ENCODE measurements at regions of chr16 and their contacts with region 1.

Region 1: GRCh38 chr16:6643080-6643686 is 689.5 kb upstream of the RBFOX1 start:
- DNase-seq: peak; percentile 31
- ATAC-seq: no peak
- H3K4me3 ChIP-seq: no peak overlapping the region
- H3K27ac ChIP-seq: no peak overlapping the region
- H3K4me1 ChIP-seq: no peaks in the 10 kb centered on the region
- H3K27me3 ChIP-seq: peaks cover 3 to 16% of the 10 kb centered on the region in 2 experiments; a peak in 3 of 5 replicates
- CTCF ChIP-seq: peak; percentile 68
- EP300 ChIP-seq: no peak
- POLR2A ChIP-seq: no peak
- RAD21 ChIP-seq: peak; percentile 41; the same call in 1 of the 2 replicates

Region 2: DNA sequence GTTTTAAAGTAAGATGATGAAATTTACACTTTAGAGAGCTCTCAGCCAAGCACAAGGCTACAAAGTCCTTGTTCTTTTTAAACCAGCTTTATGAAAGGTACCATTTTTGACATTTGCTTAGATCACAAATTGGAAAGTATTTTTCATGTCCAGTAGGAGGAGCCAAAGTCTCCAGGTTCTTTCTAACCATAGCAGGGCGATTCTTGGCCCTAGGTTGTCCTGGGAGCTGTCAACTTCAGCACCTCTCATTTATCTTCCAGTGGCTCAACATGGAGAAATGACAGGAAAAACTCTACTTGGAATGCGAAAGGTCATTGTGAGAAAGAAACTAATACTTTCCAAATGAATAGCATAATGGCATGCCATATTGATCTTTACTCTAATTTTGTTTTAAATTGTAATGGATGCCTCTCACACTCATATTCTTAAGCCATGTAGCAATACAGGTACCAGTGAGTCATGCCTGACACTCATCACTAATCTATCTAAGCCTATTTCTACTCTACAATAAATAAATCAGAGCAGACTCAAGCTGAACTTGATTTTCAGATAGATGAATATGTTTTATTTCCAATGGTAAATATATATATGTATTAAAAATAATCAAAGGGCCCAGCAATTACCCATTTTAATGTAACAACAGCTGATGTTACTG is 626.5 kb before region 1 on chr16:
- CTCF ChIA-PET with region 1: interaction called, 5 read pairs
- POLR2A ChIA-PET with region 1: no interaction called
- in situ Hi-C with region 1: loop called (anchors 5 kb)
- intact Hi-C with region 1: no loop called
- DNase-seq: peak; percentile 29
- ATAC-seq: peak; percentile 67; the same call in 2 of the 3 replicates
- H3K4me3 ChIP-seq: no peak overlapping the region
- H3K27ac ChIP-seq: no peak overlapping the region
- H3K4me1 ChIP-seq: no peaks in the 10 kb centered on the region
- H3K27me3 ChIP-seq: peaks cover 0 to 3% of the 10 kb centered on the region in 2 experiments; a peak in 2 of 5 replicates
- CTCF ChIP-seq: peak; percentile 57
- EP300 ChIP-seq: no peak
- POLR2A ChIP-seq: no peak
- RAD21 ChIP-seq: no peak

Region 3: GRCh38 chr16:6360641-6361040 is 282.5 kb before region 1 on chr16:
- CTCF ChIA-PET with region 1: no interaction called
- POLR2A ChIA-PET with region 1: no interaction called
- in situ Hi-C with region 1: no loop called
- intact Hi-C with region 1: no loop called
- DNase-seq: no peak
- ATAC-seq: no peak
- H3K4me3 ChIP-seq: no peak overlapping the region
- H3K27ac ChIP-seq: no peak overlapping the region
- H3K4me1 ChIP-seq: no peaks in the 10 kb centered on the region
- H3K27me3 ChIP-seq: no peaks in the 10 kb centered on the region; a peak in 1 of 5 replicates
- CTCF ChIP-seq: no peak
- EP300 ChIP-seq: no peak
- POLR2A ChIP-seq: no peak
- RAD21 ChIP-seq: no peak

Region 4: DNA sequence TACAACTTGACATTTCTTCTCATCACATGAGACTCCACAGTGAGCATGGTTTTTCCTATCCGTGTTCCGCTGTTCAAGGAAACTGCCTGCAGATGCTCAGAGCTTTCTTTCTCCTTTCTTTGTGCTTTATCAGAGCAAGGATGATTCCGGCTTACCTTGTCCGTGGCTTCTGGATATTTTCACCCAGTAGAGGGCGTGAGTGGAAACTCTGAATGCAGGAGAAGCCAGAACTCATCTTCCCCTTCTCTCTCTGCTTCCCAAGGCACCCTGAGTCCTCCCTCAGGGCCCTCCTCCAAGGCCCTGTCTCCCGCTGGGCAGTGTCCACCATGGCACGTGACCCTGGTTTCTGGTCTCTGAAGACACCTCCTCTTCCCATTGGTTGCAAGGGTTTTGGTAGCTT is 31.6 kb before region 1 on chr16:
- CTCF ChIA-PET with region 1: no interaction called
- POLR2A ChIA-PET with region 1: no interaction called
- in situ Hi-C with region 1: no loop called
- intact Hi-C with region 1: loop called (anchors 2 kb)
- DNase-seq: no peak
- ATAC-seq: no peak
- H3K4me3 ChIP-seq: no peak overlapping the region
- H3K27ac ChIP-seq: no peak overlapping the region
- H3K4me1 ChIP-seq: no peaks in the 10 kb centered on the region
- H3K27me3 ChIP-seq: peaks cover 0 to 4% of the 10 kb centered on the region in 2 experiments; a peak in 1 of 5 replicates
- CTCF ChIP-seq: 0 out of 2 replicates have a peak, but pooled peaks have one; percentile 14
- EP300 ChIP-seq: no peak
- POLR2A ChIP-seq: no peak
- RAD21 ChIP-seq: no peak

Region 5: GRCh38 chr16:6698548-6698947 is 55.4 kb after region 1 on chr16:
- CTCF ChIA-PET with region 1: no interaction called
- POLR2A ChIA-PET with region 1: no interaction called
- in situ Hi-C with region 1: no loop called
- intact Hi-C with region 1: no loop called
- DNase-seq: no peak
- ATAC-seq: no peak
- H3K4me3 ChIP-seq: no peak overlapping the region
- H3K27ac ChIP-seq: no peak overlapping the region
- H3K4me1 ChIP-seq: no peaks in the 10 kb centered on the region
- H3K27me3 ChIP-seq: no peaks in the 10 kb centered on the region
- CTCF ChIP-seq: no peak
- EP300 ChIP-seq: no peak
- POLR2A ChIP-seq: no peak
- RAD21 ChIP-seq: no peak